MCF 10A (cell line): ENCODE measurements at regions of chr17 and their contacts with region 1.

Region 1: GRCh38 chr17:54992797-54993639 is 24.5 kb downstream of the STXBP4 start:
- DNase-seq: peak; percentile 63
- H3K4me3 Mint-ChIP-seq: no peak overlapping the region
- H3K27ac Mint-ChIP-seq: no peak overlapping the region
- H3K4me1 Mint-ChIP-seq: no peaks in the 10 kb centered on the region
- H3K27me3 Mint-ChIP-seq: no peaks in the 10 kb centered on the region
- CTCF ChIP-seq: peak; percentile 61

Region 2: GRCh38 chr17:55005520-55005919 is 12.5 kb after region 1 on chr17:
- CTCF ChIA-PET with region 1: interaction called, 36 read pairs
- POLR2A ChIA-PET with region 1: interaction called, 3 read pairs
- intact Hi-C with region 1: no loop called
- DNase-seq: peak; percentile 35
- H3K4me3 Mint-ChIP-seq: no peak overlapping the region
- H3K27ac Mint-ChIP-seq: no peak overlapping the region
- H3K4me1 Mint-ChIP-seq: no peaks in the 10 kb centered on the region
- H3K27me3 Mint-ChIP-seq: no peaks in the 10 kb centered on the region
- CTCF ChIP-seq: peak; percentile 44

Region 3: GRCh38 chr17:55285340-55286301 is 292.6 kb after region 1 on chr17:
- CTCF ChIA-PET with region 1: interaction called, 14 read pairs
- POLR2A ChIA-PET with region 1: no interaction called
- intact Hi-C with region 1: no loop called
- DNase-seq: peak; percentile 89
- H3K4me3 Mint-ChIP-seq: peak overlapping the region; percentile 28
- H3K27ac Mint-ChIP-seq: peak overlapping the region; percentile 90
- H3K4me1 Mint-ChIP-seq: peaks cover 27% of the 10 kb centered on the region
- H3K27me3 Mint-ChIP-seq: no peaks in the 10 kb centered on the region
- CTCF ChIP-seq: no peak

Region 4: GRCh38 chr17:55304171-55304967 is 311.4 kb after region 1 on chr17:
- CTCF ChIA-PET with region 1: interaction called, 19 read pairs
- POLR2A ChIA-PET with region 1: no interaction called
- intact Hi-C with region 1: no loop called
- DNase-seq: no peak
- H3K4me3 Mint-ChIP-seq: no peak overlapping the region
- H3K27ac Mint-ChIP-seq: no peak overlapping the region
- H3K4me1 Mint-ChIP-seq: no peaks in the 10 kb centered on the region
- H3K27me3 Mint-ChIP-seq: no peaks in the 10 kb centered on the region
- CTCF ChIP-seq: no peak

Region 5: GRCh38 chr17:55348749-55349354 is 355.8 kb after region 1 on chr17:
- CTCF ChIA-PET with region 1: interaction called, 154 read pairs
- POLR2A ChIA-PET with region 1: no interaction called
- intact Hi-C with region 1: loop called (anchors 1 kb)
- DNase-seq: peak; percentile 60
- H3K4me3 Mint-ChIP-seq: no peak overlapping the region
- H3K27ac Mint-ChIP-seq: no peak overlapping the region
- H3K4me1 Mint-ChIP-seq: peaks cover 5% of the 10 kb centered on the region
- H3K27me3 Mint-ChIP-seq: no peaks in the 10 kb centered on the region
- CTCF ChIP-seq: peak; percentile 75

Region 6: DNA sequence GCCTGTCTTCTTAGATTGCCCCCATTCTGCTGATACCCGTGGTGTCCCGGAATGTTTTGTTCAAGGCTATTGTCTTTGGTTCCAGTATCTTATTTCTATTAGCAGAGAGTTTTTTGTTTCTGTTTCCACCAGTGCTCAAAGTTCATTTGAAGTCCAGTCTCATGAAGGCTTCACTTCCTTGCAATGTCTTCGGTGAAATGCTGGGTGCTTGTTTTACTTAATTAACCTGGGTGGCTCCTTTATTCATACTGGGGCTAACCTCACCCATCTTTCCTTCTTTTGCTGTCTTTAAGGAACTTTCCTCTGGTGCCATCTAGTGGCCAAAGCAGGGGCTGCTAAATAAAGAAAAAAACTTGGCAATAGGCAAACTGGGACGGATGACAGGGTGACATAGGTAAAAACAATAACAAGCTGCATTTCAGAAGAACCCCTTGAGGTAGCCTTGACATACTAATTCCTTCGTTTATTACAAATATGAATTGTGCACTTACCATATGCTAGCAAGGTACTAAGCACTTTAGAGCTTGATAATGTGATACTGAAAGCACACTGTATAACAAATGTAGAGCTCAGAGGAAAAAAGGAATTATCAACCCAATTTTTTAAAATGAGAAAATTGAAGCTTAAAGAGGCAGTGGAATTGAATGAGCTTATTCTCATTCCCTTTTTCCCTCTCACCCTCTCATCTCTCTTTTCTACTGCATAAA is 521.0 kb after region 1 on chr17:
- CTCF ChIA-PET with region 1: interaction called, 23 read pairs
- POLR2A ChIA-PET with region 1: no interaction called
- intact Hi-C with region 1: loop called (anchors 1 kb)
- DNase-seq: peak; percentile 80
- H3K4me3 Mint-ChIP-seq: no peak overlapping the region
- H3K27ac Mint-ChIP-seq: no peak overlapping the region
- H3K4me1 Mint-ChIP-seq: no peaks in the 10 kb centered on the region
- H3K27me3 Mint-ChIP-seq: peaks cover 10% of the 10 kb centered on the region
- CTCF ChIP-seq: peak; percentile 82